T-cell (primary cell): ENCODE measurements at regions of chr9 and their contacts with region 1.

Region 1: GRCh38 chr9:111621895-111622480 is 9.1 kb upstream of the DNAJC25 start:
- DNase-seq: peak in 11 of 35 experiments; percentile 10 to 62 (median 23)
- ATAC-seq: peak in 3 of 4 experiments; percentile 69 to 77 (median 72)
- H3K4me3 ChIP-seq: no peak overlapping the region
- H3K4me3 Mint-ChIP-seq: no peak overlapping the region
- H3K27ac ChIP-seq: no peak overlapping the region
- H3K27ac Mint-ChIP-seq: no peak overlapping the region
- H3K4me1 ChIP-seq: no peaks in the 10 kb centered on the region
- H3K4me1 Mint-ChIP-seq: no peaks in the 10 kb centered on the region
- H3K27me3 ChIP-seq: peaks cover 0 to 5% of the 10 kb centered on the region in 2 experiments
- H3K27me3 Mint-ChIP-seq: peaks cover 12% of the 10 kb centered on the region in 2 donors

Region 2: GRCh38 chr9:111588846-111589245 is 33.1 kb before region 1 on chr9:
- CTCF ChIA-PET with region 1: no interaction called
- POLR2A ChIA-PET with region 1: interaction called in 1 of 2 experiments, 18 read pairs
- DNase-seq: no peak
- ATAC-seq: no peak
- H3K4me3 ChIP-seq: no peak overlapping the region
- H3K4me3 Mint-ChIP-seq: no peak overlapping the region
- H3K27ac ChIP-seq: no peak overlapping the region
- H3K27ac Mint-ChIP-seq: no peak overlapping the region
- H3K4me1 ChIP-seq: no peaks in the 10 kb centered on the region
- H3K4me1 Mint-ChIP-seq: no peaks in the 10 kb centered on the region
- H3K27me3 ChIP-seq: peaks cover 0 to 3% of the 10 kb centered on the region in 2 experiments
- H3K27me3 Mint-ChIP-seq: peaks cover 3 to 8% of the 10 kb centered on the region in 2 donors

Region 3: DNA sequence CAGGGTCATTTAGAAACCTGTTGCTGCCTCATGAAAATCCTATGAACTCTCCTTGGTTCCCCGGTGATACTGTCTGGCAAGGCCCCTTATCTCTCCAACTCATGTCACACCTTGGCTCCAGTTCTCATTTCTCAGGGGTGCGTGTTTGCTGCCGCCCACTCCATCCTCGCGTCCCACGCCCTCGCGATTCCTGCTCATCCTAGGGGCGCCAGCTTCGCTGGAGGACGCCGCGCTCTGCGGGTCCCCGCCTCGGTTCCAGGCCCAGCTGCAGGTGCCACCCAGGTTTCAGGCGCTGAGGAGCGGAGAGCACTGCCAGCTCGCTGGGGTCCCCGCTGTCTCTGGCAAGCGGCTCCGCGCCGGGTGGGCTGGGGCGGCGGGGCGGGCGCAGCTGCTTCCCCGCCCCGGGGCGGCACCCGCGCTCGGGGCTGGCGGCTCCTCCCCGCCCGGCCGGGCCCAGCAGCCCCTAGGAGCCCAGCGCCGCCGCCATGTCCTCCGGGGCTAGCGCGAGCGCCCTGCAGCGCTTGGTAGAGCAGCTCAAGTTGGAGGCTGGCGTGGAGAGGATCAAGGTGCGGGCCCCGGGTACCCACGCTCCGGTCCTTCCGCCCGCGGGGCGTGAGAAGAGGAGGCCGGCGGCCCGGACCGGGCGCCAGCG is 39.3 kb after region 1 on chr9 and contains the start of gene GNG10:
- CTCF ChIA-PET with region 1: no interaction called
- POLR2A ChIA-PET with region 1: no interaction called
- DNase-seq: peak; percentile 19 to 76 (median 59)
- ATAC-seq: peak; percentile 93 to 96 (median 94)
- H3K4me3 ChIP-seq: peak within 1 kb of the TSS; percentile 78 to 86
- H3K4me3 Mint-ChIP-seq: peak within 1 kb of the TSS; percentile 93 to 96 (median 96)
- H3K27ac ChIP-seq: peak within 1 kb of the TSS; percentile 42
- H3K27ac Mint-ChIP-seq: peak within 1 kb of the TSS; percentile 94 to 95
- H3K4me1 ChIP-seq: peaks cover 20 to 31% of the 10 kb centered on the region in 2 experiments
- H3K4me1 Mint-ChIP-seq: peaks cover 31 to 43% (median 40%) of the 10 kb centered on the region in 3 donors
- H3K27me3 ChIP-seq: no peaks in the 10 kb centered on the region
- H3K27me3 Mint-ChIP-seq: no peaks in the 10 kb centered on the region
- total RNA-seq, gene GNG10: 6.1 to 11.7 (median 7.7) TPM

Region 4: DNA sequence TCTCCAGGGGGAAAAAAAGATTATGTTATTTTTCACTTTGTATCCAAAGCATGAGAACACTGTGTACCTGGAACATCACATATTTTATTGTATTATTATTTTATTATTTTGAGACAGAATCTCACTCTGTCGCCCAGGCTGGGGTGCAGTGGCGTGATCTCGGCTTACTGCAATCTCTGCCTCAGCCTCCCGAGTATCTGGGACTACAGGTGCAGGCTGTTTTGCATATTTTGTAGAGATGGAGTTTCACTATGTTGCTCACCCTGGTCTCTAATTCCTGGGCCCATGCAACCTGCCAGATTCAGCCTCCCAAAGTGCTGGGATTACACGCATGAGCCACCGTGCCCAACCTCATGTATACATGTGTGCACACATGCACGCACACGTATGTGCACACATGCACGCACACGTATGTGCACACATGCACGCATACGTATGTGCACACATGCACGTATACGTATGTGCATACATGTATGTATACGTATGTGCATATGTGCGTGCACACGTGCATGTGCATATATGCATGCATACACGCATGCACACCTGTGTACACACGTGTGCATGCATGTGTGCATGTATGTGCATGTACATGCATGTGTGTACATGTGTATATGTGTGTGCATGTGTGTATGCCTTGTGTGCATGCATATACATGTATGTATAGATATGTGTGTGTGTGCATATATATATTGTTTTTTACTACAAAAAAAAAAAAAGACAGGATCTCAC is 265.2 kb after region 1 on chr9:
- CTCF ChIA-PET with region 1: no interaction called
- POLR2A ChIA-PET with region 1: no interaction called
- DNase-seq: no peak
- ATAC-seq: no peak
- H3K4me3 ChIP-seq: no peak overlapping the region
- H3K4me3 Mint-ChIP-seq: no peak overlapping the region
- H3K27ac ChIP-seq: no peak overlapping the region
- H3K27ac Mint-ChIP-seq: no peak overlapping the region
- H3K4me1 ChIP-seq: peaks cover 5 to 11% of the 10 kb centered on the region in 2 experiments
- H3K4me1 Mint-ChIP-seq: peaks cover 3 to 9% (median 8%) of the 10 kb centered on the region in 3 donors
- H3K27me3 ChIP-seq: no peaks in the 10 kb centered on the region
- H3K27me3 Mint-ChIP-seq: no peaks in the 10 kb centered on the region